IMR-90 (cell line): ENCODE measurements at regions of chr2 and their contacts with region 1.

Region 1: DNA sequence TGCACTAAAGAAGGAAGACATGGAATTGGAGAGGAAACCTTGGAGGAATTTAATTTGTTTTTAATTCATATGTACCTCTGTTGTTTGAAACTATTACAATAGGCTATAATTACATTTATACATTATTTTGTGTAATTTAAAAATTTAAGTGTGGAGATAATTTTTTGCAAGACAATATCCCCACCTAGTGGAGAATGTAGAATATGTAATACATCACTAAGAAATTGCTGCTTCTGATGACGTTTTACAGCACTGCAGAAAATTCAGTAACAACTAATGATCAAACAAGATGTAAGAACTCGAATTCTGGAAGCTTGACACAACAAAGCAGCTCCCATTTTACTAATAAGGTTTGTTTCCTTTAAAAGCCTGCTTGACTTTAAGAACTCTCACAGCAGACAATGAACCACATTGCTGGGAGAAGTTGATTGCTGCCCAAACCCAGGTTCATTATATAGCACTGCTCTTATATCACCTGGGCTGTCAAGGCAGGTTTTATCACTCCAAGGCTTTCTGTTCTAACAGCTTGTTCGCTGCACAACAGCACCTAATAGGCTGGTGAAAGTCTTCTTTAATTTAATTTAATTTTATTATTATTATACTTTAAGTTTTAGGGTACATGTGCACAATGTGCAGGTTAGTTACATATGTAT is 53.4 kb downstream of the THADA start:
- DNase-seq: peak; percentile 68
- ATAC-seq: peak; percentile 77
- H3K4me3 ChIP-seq: no peak overlapping the region
- H3K27ac ChIP-seq: no peak overlapping the region
- H3K4me1 ChIP-seq: peaks cover 7% of the 10 kb centered on the region
- H3K27me3 ChIP-seq: no peaks in the 10 kb centered on the region
- CTCF ChIP-seq: peak; percentile 58
- POLR2A ChIP-seq: no peak
- RAD21 ChIP-seq: peak; percentile 72

Region 2: GRCh38 chr2:41691561-41691960 is 1850.8 kb before region 1 on chr2:
- CTCF ChIA-PET with region 1: no interaction called
- POLR2A ChIA-PET with region 1: no interaction called
- dilution Hi-C with region 1: no loop called
- in situ Hi-C with region 1: no loop called
- intact Hi-C with region 1: no loop called
- DNase-seq: no peak
- ATAC-seq: no peak
- H3K4me3 ChIP-seq: no peak overlapping the region
- H3K27ac ChIP-seq: no peak overlapping the region
- H3K4me1 ChIP-seq: no peaks in the 10 kb centered on the region
- H3K27me3 ChIP-seq: peaks cover 3% of the 10 kb centered on the region; the same call in 1 of the 2 replicates
- CTCF ChIP-seq: no peak
- POLR2A ChIP-seq: no peak
- RAD21 ChIP-seq: no peak

Region 3: GRCh38 chr2:43507137-43507536 is 35.3 kb before region 1 on chr2:
- CTCF ChIA-PET with region 1: no interaction called
- POLR2A ChIA-PET with region 1: no interaction called
- dilution Hi-C with region 1: no loop called
- in situ Hi-C with region 1: no loop called
- intact Hi-C with region 1: loop called (anchors 5 kb)
- DNase-seq: no peak
- ATAC-seq: no peak
- H3K4me3 ChIP-seq: no peak overlapping the region
- H3K27ac ChIP-seq: no peak overlapping the region
- H3K4me1 ChIP-seq: no peaks in the 10 kb centered on the region
- H3K27me3 ChIP-seq: no peaks in the 10 kb centered on the region
- CTCF ChIP-seq: no peak
- POLR2A ChIP-seq: no peak
- RAD21 ChIP-seq: no peak

Region 4: DNA sequence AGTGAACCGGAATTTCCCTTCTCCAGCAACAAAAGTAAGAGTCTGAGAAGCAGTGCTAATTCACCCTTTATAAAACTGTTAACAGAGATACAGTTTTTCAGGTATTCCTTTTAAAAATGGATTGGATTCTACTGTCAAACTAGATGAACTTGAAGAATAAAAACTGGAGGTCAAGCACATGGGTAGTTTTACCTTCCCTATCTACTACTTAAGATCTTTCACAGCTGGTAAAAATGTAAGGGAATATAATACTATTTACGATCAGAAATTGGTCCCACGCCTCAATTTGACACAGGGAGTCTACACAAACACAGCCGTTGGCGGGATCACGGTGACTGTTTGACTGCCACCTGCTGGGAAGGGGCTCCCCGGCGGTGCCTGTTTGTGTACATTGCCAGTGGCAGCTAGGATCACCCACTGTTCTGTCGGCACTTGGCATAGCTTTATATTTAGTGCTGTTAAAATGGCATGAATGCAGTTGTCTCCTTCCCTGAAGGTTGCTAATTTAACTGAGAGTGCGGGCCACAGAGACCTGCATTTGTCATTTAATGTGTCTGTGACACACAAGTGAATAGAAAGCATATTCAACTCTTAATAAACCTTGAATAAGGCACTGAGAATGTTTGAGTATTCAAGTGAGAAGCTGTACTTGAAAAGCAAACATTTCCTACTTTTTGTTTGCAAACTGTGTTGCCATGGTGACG is 355.9 kb after region 1 on chr2:
- CTCF ChIA-PET with region 1: no interaction called
- POLR2A ChIA-PET with region 1: no interaction called
- dilution Hi-C with region 1: no loop called
- in situ Hi-C with region 1: no loop called
- intact Hi-C with region 1: no loop called
- DNase-seq: peak; percentile 8
- ATAC-seq: no peak
- H3K4me3 ChIP-seq: no peak overlapping the region
- H3K27ac ChIP-seq: no peak overlapping the region
- H3K4me1 ChIP-seq: peaks cover 2% of the 10 kb centered on the region
- H3K27me3 ChIP-seq: no peaks in the 10 kb centered on the region
- CTCF ChIP-seq: no peak
- POLR2A ChIP-seq: no peak
- RAD21 ChIP-seq: no peak